ENCODE measurements at regions of chr17 and their contacts with region 1.

Region 1: DNA sequence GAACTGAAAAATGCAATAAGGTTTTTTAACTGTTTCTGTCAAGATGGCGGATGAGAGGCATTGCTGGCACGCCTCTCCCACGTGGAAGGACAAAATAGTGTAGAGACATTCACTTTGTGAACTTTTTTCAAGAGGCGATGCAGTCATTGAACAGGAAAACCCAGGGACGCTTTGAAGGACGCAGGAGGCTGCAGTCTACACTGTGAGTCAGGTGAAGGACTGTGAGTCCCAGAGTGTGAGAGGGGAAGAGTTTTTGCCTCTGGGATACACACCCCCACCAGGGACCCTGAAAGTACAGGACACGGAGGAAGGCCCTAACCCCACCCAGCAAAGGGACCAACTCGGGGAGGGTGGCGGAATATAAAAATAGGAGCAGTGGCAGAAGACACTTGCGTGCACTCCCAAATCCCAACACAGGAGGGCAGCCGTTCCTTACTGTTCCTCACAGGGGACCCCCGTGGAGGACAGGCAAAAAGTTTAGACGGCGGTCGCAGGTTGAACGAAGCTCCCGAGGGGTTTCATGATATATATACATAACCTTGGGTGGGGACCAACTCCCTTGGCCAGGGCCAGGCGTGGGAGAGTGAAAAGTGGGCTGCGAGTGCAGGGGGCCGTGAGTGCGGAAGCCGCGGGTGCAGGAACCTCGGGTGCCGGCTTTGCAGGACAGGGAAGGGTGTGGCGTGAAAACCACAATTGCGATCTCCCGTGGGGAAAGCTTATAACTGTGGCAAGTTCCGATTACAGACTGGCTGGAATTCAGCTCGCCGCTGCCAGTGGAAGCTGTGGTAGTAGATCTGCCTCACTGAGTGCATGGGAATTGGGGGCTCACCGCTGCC is 82.0 kb upstream of the ALOX12 start:
- DNase-seq: no peak
- H3K4me3 ChIP-seq: no peak overlapping the region
- CTCF ChIP-seq: peak; percentile 82

Region 2: GRCh38 chr17:6894206-6894528 is 19.7 kb before region 1 on chr17:
- CTCF ChIA-PET with region 1: interaction called, 10 read pairs
- POLR2A ChIA-PET with region 1: no interaction called
- DNase-seq: no peak
- H3K4me3 ChIP-seq: no peak overlapping the region
- CTCF ChIP-seq: peak; percentile 42

Region 3: DNA sequence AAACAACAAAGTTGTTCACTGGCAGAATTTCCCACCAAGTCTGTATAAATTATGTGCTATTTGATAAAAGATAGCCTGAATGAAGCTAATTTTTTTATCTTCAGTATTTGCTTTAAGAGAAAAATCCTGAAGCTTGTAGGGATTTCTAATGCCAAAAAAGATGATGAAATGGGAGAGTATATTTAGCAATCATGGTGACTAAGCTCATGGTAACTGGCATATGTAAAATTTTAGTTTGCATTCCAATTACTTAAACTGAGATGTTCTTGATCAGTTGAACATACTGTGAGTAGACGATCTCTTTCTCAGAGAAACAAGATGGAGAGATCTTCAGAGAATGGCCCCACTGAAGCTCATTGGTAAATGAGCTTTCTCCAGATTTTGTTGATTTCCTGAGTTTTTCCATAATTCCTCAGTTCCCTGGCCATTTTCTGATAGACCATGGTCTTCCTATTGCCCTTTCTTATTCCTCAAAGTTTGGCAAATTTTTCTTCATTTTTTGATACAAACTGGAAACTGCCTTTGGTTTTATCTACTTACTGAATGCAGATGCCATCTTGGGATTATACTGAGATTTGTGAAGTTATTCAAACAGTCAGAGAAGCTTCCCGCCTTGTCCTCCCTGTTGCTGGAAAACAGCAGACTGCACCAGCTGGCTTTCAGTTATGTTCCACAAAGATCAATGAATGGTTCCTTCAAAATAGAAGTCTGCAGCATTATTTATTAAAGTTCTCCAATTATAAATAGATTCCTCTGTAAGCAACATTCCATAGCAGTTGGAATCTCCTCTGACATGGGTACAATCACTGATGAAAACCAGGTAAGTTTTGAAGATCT is 13.7 kb after region 1 on chr17:
- CTCF ChIA-PET with region 1: interaction called, 61 read pairs
- POLR2A ChIA-PET with region 1: no interaction called
- DNase-seq: peak; percentile 5
- H3K4me3 ChIP-seq: no peak overlapping the region
- CTCF ChIP-seq: no peak

Region 4: DNA sequence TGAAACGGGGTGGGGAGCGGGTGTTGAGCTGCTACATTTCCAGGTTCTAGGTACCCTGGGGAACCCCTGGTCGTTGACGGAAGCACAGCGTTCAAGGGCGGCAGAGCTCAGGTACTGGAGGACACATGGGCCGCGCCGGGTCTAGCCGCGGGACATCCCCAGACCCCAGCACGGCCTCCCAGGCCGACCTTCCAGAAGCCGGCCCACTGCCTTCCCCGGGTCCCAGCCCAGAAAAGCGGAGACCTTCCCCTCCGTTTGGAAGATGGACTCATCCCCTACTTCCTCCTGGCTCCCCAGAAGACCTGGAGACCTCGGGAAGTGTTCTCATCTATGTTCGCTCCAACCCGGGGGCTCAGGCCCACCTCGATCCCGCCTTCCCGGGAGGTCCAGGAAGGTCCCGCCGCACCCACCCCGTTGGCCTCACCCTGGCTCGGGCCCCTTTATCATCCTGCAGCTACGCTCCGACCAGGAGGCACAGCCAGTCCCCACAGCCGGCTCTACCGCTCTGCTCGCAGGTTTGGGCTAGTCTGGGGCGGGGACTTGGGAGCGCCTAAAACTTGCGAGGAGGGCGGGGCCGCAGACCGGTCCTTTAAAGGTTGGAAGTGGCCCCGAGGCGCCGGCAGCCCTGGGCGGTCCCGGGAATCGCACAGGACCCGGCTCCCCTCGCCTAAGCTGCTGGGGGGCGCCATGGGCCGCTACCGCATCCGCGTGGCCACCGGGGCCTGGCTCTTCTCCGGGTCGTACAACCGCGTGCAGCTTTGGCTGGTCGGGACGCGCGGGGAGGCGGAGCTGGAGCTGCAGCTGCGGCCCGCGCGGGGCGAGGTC is 81.8 kb after region 1 on chr17 and contains the start of gene ALOX12:
- CTCF ChIA-PET with region 1: interaction called, 189 read pairs
- POLR2A ChIA-PET with region 1: no interaction called
- DNase-seq: no peak
- H3K4me3 ChIP-seq: 0 out of 2 replicates have a peak within 1 kb of the TSS, but pooled peaks have one; percentile 23
- CTCF ChIP-seq: no peak

Region 5: GRCh38 chr17:7014261-7014994 is 100.6 kb after region 1 on chr17:
- CTCF ChIA-PET with region 1: interaction called, 301 read pairs
- POLR2A ChIA-PET with region 1: no interaction called
- DNase-seq: peak; percentile 73
- H3K4me3 ChIP-seq: peak overlapping the region; percentile 97
- CTCF ChIP-seq: peak; percentile 84

Region 6: GRCh38 chr17:7136266-7136877 is 222.5 kb after region 1 on chr17:
- CTCF ChIA-PET with region 1: interaction called, 11 read pairs
- POLR2A ChIA-PET with region 1: no interaction called
- DNase-seq: peak; percentile 4
- H3K4me3 ChIP-seq: no peak overlapping the region
- CTCF ChIP-seq: peak; percentile 72

Measured in AG04449 (cell line).